Natural killer cell (primary cell): ENCODE measurements at regions of chr9 and their contacts with region 1.

Region 1: DNA sequence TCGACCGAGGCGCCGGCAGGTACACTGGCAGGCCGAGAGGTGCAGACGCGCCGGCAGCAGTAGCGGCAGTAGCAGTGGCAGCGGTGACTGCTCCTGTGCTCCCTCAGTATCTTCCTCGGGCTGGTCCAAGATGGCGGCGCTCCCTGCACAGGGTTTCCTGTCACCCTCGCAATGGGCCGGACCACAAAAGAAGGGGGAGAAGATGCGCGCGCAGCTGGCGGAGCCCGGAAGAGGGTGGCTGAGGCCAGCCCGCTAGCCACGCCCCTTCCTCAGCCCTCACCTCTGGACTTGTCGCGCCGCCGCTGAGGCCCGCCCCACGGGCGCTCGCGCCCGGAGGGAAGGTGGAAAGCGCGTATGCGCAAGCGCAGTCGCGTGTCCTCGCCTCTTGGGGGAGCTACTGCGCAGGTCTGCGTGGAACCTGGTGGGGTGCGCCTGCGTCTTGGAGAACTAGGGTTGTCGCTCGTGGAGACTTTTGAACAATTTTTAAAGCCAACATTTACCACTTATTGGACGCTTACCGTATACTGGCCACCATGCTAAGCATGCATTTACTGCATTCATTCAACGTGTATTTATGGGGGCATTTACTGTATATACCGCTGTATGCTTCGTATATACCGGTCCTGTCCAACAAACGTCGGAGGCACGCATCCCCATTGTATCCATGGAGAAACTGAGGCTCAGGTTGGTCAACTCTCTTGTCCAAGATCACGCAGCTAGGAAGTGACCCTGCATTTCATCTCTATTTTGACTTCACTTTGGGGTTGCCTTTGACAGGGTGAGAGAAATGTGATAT is at the start of gene RAB14:
- DNase-seq: peak; percentile 100
- ATAC-seq: peak; percentile 88 to 96 (median 89)
- H3K4me3 ChIP-seq: peak within 1 kb of the TSS; percentile 96
- H3K4me3 Mint-ChIP-seq: peak within 1 kb of the TSS; percentile 94
- H3K27ac ChIP-seq: peak within 1 kb of the TSS; percentile 92
- H3K27ac Mint-ChIP-seq: peak within 1 kb of the TSS; percentile 89 to 94
- H3K4me1 ChIP-seq: peaks cover 19% of the 10 kb centered on the region
- H3K4me1 Mint-ChIP-seq: peaks cover 47 to 50% of the 10 kb centered on the region in 2 donors
- H3K27me3 ChIP-seq: no peaks in the 10 kb centered on the region
- H3K27me3 Mint-ChIP-seq: no peaks in the 10 kb centered on the region
- CTCF ChIP-seq: peak; percentile 42
- total RNA-seq, gene RAB14: 46.2 to 67.6 (median 57.3) TPM

Region 2: DNA sequence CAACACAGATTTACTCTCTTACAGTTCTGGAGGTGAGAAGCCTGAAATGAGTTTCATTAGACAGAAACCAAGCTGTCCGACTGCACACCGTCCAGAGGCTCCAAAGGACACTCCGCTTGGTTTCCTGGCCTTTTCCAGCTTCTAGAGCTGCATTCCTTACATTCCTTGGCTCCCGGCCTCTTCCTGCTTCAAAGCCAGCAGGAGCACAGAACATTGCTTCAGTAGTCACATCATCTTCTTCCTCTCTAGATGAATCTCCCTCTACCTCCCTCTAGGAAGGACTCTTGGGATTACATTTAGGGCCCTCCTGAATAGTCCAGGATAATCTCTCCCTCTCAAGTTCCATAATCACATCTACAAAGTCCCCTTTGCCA is 835.3 kb before region 1 on chr9:
- intact Hi-C with region 1: no loop called
- DNase-seq: no peak
- ATAC-seq: no peak
- H3K4me3 ChIP-seq: no peak overlapping the region
- H3K4me3 Mint-ChIP-seq: no peak overlapping the region
- H3K27ac ChIP-seq: no peak overlapping the region
- H3K27ac Mint-ChIP-seq: no peak overlapping the region
- H3K4me1 ChIP-seq: no peaks in the 10 kb centered on the region
- H3K4me1 Mint-ChIP-seq: no peaks in the 10 kb centered on the region
- H3K27me3 ChIP-seq: no peaks in the 10 kb centered on the region
- H3K27me3 Mint-ChIP-seq: peaks cover 0 to 5% of the 10 kb centered on the region in 2 donors
- CTCF ChIP-seq: no peak

Region 3: GRCh38 chr9:121121582-121122087 is 80.3 kb before region 1 on chr9:
- intact Hi-C with region 1: loop called (anchors 5 kb)
- DNase-seq: peak; percentile 94 to 97
- ATAC-seq: peak; percentile 98 to 100 (median 100)
- H3K4me3 ChIP-seq: peak overlapping the region; percentile 46
- H3K4me3 Mint-ChIP-seq: peak overlapping the region; percentile 98
- H3K27ac ChIP-seq: peak overlapping the region; percentile 65
- H3K27ac Mint-ChIP-seq: peak overlapping the region; percentile 90 to 98
- H3K4me1 ChIP-seq: peaks cover 3% of the 10 kb centered on the region
- H3K4me1 Mint-ChIP-seq: peaks cover 36 to 40% of the 10 kb centered on the region in 2 donors
- H3K27me3 ChIP-seq: no peaks in the 10 kb centered on the region
- H3K27me3 Mint-ChIP-seq: no peaks in the 10 kb centered on the region
- CTCF ChIP-seq: no peak

Region 4: GRCh38 chr9:121707477-121708424 is 505.8 kb after region 1 on chr9:
- intact Hi-C with region 1: no loop called
- DNase-seq: peak in 1 of 2 donors; percentile 9
- ATAC-seq: peak in 2 of 3 donors; percentile 19 to 49
- H3K4me3 ChIP-seq: no peak overlapping the region
- H3K4me3 Mint-ChIP-seq: no peak overlapping the region
- H3K27ac ChIP-seq: no peak overlapping the region
- H3K27ac Mint-ChIP-seq: peak overlapping the region in 1 of 2 donors; percentile 24
- H3K4me1 ChIP-seq: peaks cover 11% of the 10 kb centered on the region
- H3K4me1 Mint-ChIP-seq: peaks cover 4 to 11% of the 10 kb centered on the region in 2 donors
- H3K27me3 ChIP-seq: no peaks in the 10 kb centered on the region
- H3K27me3 Mint-ChIP-seq: peaks cover 2 to 11% of the 10 kb centered on the region in 2 donors
- CTCF ChIP-seq: no peak